Right ventricle myocardium inferior (tissue), 1 donor: ENCODE measurements at regions of chrX and their contacts with region 1.

Region 1: GRCh38 chrX:49915361-49916222 is 6.8 kb upstream of the CLCN5 start:
- DNase-seq: no peak
- ATAC-seq: no peak

Region 2: DNA sequence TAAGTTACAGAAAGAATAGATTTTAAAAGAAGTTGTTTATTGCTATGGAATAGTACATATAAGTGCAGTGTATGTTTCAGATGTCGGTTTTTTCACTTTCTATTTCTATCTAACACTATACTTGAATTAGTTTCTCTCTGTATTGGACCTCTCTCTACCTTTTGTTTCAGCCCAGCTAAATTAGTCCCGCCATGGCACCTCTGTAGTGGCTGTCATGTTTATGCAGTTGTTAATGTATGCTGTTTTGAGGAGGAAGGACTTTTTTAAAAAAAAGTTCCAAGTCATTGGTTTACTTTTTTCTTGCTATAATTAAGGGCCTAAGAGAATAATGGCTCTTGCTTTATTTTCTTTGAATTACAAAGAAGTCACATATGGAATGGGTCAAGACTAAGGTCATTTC is 167.1 kb after region 1 on chrX:
- intact Hi-C with region 1: loop called (anchors 2 kb)
- DNase-seq: no peak
- ATAC-seq: no peak